ENCODE measurements at regions of chr14 and their contacts with region 1.

Region 1: DNA sequence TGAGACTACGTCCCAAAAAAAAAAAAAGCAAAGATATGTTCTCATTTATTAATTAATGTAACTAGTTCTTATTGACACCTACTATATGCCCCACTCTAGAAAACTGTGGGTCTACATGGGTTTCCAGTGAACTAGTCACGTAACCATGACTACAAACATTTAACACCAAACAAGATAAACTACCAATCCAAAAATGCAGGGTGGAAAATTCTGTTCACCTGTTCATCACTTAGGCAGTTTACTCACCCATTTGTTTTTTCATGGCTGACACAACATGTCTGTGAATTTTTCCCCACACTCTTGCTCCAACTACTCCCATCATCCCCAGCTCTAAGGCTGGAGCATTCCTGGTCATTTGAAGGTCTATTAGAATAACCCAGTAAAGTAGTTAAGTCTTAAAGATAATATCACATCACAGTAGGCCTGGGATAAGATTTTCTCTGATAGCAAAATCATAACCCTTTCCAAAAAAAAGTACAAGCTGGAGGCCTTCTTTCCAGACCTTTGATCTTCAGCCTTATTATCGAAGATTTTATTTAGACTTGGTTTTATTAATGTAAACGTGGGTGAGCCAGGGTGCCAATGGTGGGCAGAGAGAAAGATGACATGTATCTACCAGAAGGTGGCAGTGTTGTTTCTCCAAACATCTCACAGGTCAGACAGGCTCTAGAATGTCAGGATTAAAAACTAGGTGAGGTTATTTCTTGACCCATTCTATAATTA is 61.6 kb upstream of the DAAM1 start:
- DNase-seq: peak; percentile 52 to 68
- ATAC-seq: peak; percentile 93 to 97
- H3K4me3 ChIP-seq: no peak overlapping the region
- H3K27ac ChIP-seq: no peak overlapping the region
- H3K4me1 ChIP-seq: no peaks in the 10 kb centered on the region
- CTCF ChIP-seq: peak; percentile 90
- EP300 ChIP-seq: no peak
- POLR2A ChIP-seq: no peak
- RAD21 ChIP-seq: peak; percentile 95

Region 2: GRCh38 chr14:58501214-58501816 is 625.6 kb before region 1 on chr14:
- CTCF ChIA-PET with region 1: interaction called, 66 read pairs
- POLR2A ChIA-PET with region 1: no interaction called
- DNase-seq: peak; percentile 21 to 80
- ATAC-seq: peak; percentile 86 to 90; a peak in 4 of 6 replicates
- H3K4me3 ChIP-seq: no peak overlapping the region
- H3K27ac ChIP-seq: no peak overlapping the region
- H3K4me1 ChIP-seq: no peaks in the 10 kb centered on the region
- CTCF ChIP-seq: peak; percentile 90
- EP300 ChIP-seq: no peak
- POLR2A ChIP-seq: no peak
- RAD21 ChIP-seq: peak; percentile 84 to 88

Region 3: GRCh38 chr14:59028476-59029202 is 98.2 kb before region 1 on chr14:
- CTCF ChIA-PET with region 1: interaction called, 80 read pairs
- POLR2A ChIA-PET with region 1: interaction called, 3 read pairs
- DNase-seq: peak; percentile 37 to 68
- ATAC-seq: peak; percentile 97 to 100
- H3K4me3 ChIP-seq: no peak overlapping the region
- H3K27ac ChIP-seq: no peak overlapping the region
- H3K4me1 ChIP-seq: peaks cover 5% of the 10 kb centered on the region; the same call in 1 of the 3 replicates
- CTCF ChIP-seq: peak; percentile 90
- EP300 ChIP-seq: no peak
- POLR2A ChIP-seq: no peak
- RAD21 ChIP-seq: peak; percentile 88 to 89

Region 4: GRCh38 chr14:59100203-59100602 is 26.7 kb before region 1 on chr14:
- CTCF ChIA-PET with region 1: interaction called, 13 read pairs
- POLR2A ChIA-PET with region 1: no interaction called
- DNase-seq: no peak
- ATAC-seq: no peak
- H3K4me3 ChIP-seq: no peak overlapping the region
- H3K27ac ChIP-seq: no peak overlapping the region
- H3K4me1 ChIP-seq: peaks cover 22% of the 10 kb centered on the region
- CTCF ChIP-seq: no peak
- EP300 ChIP-seq: no peak
- POLR2A ChIP-seq: no peak
- RAD21 ChIP-seq: no peak

Region 5: DNA sequence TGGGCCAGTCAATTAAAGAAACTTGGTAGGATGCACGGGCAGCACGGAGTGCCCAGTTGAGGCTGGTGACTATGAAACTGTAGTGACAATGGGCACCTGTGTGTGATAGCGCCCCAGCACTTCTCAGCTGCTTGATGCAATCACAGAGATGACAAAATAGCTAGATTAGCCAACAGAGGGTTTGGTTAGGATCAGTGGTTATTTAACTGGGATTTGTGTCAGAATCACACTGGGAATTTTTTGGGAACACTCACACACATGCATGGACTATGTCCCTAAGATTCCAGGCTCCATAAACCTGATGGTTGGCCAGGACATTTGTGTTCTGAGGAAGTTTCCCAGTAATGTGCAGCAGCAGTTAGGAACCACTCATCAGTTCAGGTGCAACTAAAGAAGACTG is 10.4 kb after region 1 on chr14:
- CTCF ChIA-PET with region 1: interaction called, 10 read pairs
- POLR2A ChIA-PET with region 1: no interaction called
- DNase-seq: no peak
- ATAC-seq: no peak
- H3K4me3 ChIP-seq: no peak overlapping the region
- H3K27ac ChIP-seq: no peak overlapping the region
- H3K4me1 ChIP-seq: no peaks in the 10 kb centered on the region
- CTCF ChIP-seq: no peak
- EP300 ChIP-seq: no peak
- POLR2A ChIP-seq: no peak
- RAD21 ChIP-seq: no peak

Region 6: GRCh38 chr14:59438195-59438647 is 311.4 kb after region 1 on chr14:
- CTCF ChIA-PET with region 1: interaction called, 57 read pairs
- POLR2A ChIA-PET with region 1: no interaction called
- DNase-seq: no peak
- ATAC-seq: no peak
- H3K4me3 ChIP-seq: no peak overlapping the region
- H3K27ac ChIP-seq: no peak overlapping the region
- H3K4me1 ChIP-seq: peaks cover 7% of the 10 kb centered on the region; the same call in 2 of the 3 replicates
- CTCF ChIP-seq: no peak
- EP300 ChIP-seq: no peak
- POLR2A ChIP-seq: no peak
- RAD21 ChIP-seq: no peak

Measured in A549 (cell line).